Activated CD4-positive, alpha-beta T cell treated with anti-CD3 and anti-CD28 coated beads for 36 hours (primary cell): ENCODE measurements at regions of chr17 and their contacts with region 1.

Region 1: GRCh38 chr17:5486204-5487124 is at the start of gene MIS12:
- DNase-seq: peak; percentile 99
- ATAC-seq: peak; percentile 94
- H3K4me3 Mint-ChIP-seq: peak within 1 kb of the TSS; percentile 96
- H3K27ac Mint-ChIP-seq: peak within 1 kb of the TSS; percentile 98
- H3K4me1 Mint-ChIP-seq: peaks cover 50% of the 10 kb centered on the region
- H3K27me3 Mint-ChIP-seq: no peaks in the 10 kb centered on the region
- total RNA-seq, gene MIS12: 29.4 to 34.4 TPM

Region 2: GRCh38 chr17:4739122-4740024 is 747.1 kb before region 1 on chr17 and contains the starts of genes CXCL16 and ZMYND15:
- CTCF ChIA-PET with region 1: no interaction called
- POLR2A ChIA-PET with region 1: no interaction called
- intact Hi-C with region 1: loop called in 1 of 2 experiments (anchors 10 kb)
- DNase-seq: peak; percentile 67
- ATAC-seq: peak; percentile 47
- H3K4me3 Mint-ChIP-seq: peak within 1 kb of the TSS; percentile 70
- H3K27ac Mint-ChIP-seq: peak within 1 kb of the TSS; percentile 37
- H3K4me1 Mint-ChIP-seq: peaks cover 25% of the 10 kb centered on the region
- H3K27me3 Mint-ChIP-seq: peaks cover 21% of the 10 kb centered on the region
- total RNA-seq, gene CXCL16: 1.7 to 2.5 TPM
- total RNA-seq, gene ZMYND15: 0.09 to 0.11 TPM

Region 3: GRCh38 chr17:5111402-5112204 is 374.9 kb before region 1 on chr17 and contains the start of gene ZNF232:
- CTCF ChIA-PET with region 1: no interaction called
- POLR2A ChIA-PET with region 1: no interaction called
- intact Hi-C with region 1: loop called in 1 of 2 experiments (anchors 1 kb)
- DNase-seq: peak; percentile 97
- ATAC-seq: peak; percentile 93
- H3K4me3 Mint-ChIP-seq: peak within 1 kb of the TSS; percentile 83
- H3K27ac Mint-ChIP-seq: peak within 1 kb of the TSS; percentile 73
- H3K4me1 Mint-ChIP-seq: peaks cover 27% of the 10 kb centered on the region
- H3K27me3 Mint-ChIP-seq: peaks cover 10% of the 10 kb centered on the region
- total RNA-seq, gene ZNF232: 16.1 to 16.2 TPM

Region 4: GRCh38 chr17:5438716-5439445 is 47.6 kb before region 1 on chr17 and contains the start of gene C1QBP:
- CTCF ChIA-PET with region 1: interaction called, 14 read pairs
- POLR2A ChIA-PET with region 1: interaction called, 5 read pairs
- intact Hi-C with region 1: loop called (anchors 1 to 5 kb)
- DNase-seq: peak; percentile 96
- ATAC-seq: peak; percentile 92
- H3K4me3 Mint-ChIP-seq: peak within 1 kb of the TSS; percentile 89
- H3K27ac Mint-ChIP-seq: peak within 1 kb of the TSS; percentile 92
- H3K4me1 Mint-ChIP-seq: peaks cover 44% of the 10 kb centered on the region
- H3K27me3 Mint-ChIP-seq: no peaks in the 10 kb centered on the region
- total RNA-seq, gene C1QBP: 432 to 457 TPM

Region 5: GRCh38 chr17:5545051-5545987 is 58.9 kb after region 1 on chr17:
- CTCF ChIA-PET with region 1: no interaction called
- POLR2A ChIA-PET with region 1: no interaction called
- intact Hi-C with region 1: no loop called
- DNase-seq: no peak
- ATAC-seq: no peak
- H3K4me3 Mint-ChIP-seq: no peak overlapping the region
- H3K27ac Mint-ChIP-seq: peak overlapping the region; percentile 5
- H3K4me1 Mint-ChIP-seq: peaks cover 3% of the 10 kb centered on the region
- H3K27me3 Mint-ChIP-seq: no peaks in the 10 kb centered on the region

Region 6: GRCh38 chr17:5584383-5585286 is 98.2 kb after region 1 on chr17 and contains the start of gene NLRP1:
- CTCF ChIA-PET with region 1: interaction called, 3 read pairs
- POLR2A ChIA-PET with region 1: interaction called, 8 read pairs
- intact Hi-C with region 1: loop called (anchors 1 kb)
- DNase-seq: peak; percentile 97
- ATAC-seq: peak; percentile 93
- H3K4me3 Mint-ChIP-seq: peak within 1 kb of the TSS; percentile 92
- H3K27ac Mint-ChIP-seq: peak within 1 kb of the TSS; percentile 94
- H3K4me1 Mint-ChIP-seq: peaks cover 62% of the 10 kb centered on the region
- H3K27me3 Mint-ChIP-seq: no peaks in the 10 kb centered on the region
- total RNA-seq, gene NLRP1: 31.2 to 34.0 TPM

Region 7: GRCh38 chr17:7014261-7014994 is 1528.0 kb after region 1 on chr17:
- CTCF ChIA-PET with region 1: no interaction called
- POLR2A ChIA-PET with region 1: no interaction called
- intact Hi-C with region 1: loop called in 1 of 2 experiments (anchors 1 kb)
- DNase-seq: peak; percentile 99
- ATAC-seq: peak; percentile 88
- H3K4me3 Mint-ChIP-seq: peak overlapping the region; percentile 92
- H3K27ac Mint-ChIP-seq: peak overlapping the region; percentile 99
- H3K4me1 Mint-ChIP-seq: peaks cover 54% of the 10 kb centered on the region
- H3K27me3 Mint-ChIP-seq: no peaks in the 10 kb centered on the region